PC-9 (cell line): ENCODE measurements at regions of chr16 and their contacts with region 1.

Region 1: GRCh38 chr16:31868691-31869167 is 4.9 kb upstream of the ZNF267 start:
- DNase-seq: peak; percentile 54 to 78
- H3K4me3 ChIP-seq: no peak overlapping the region
- H3K27ac ChIP-seq: no peak overlapping the region
- H3K4me1 ChIP-seq: no peaks in the 10 kb centered on the region
- H3K27me3 ChIP-seq: peaks cover 13% of the 10 kb centered on the region
- CTCF ChIP-seq: peak; percentile 94

Region 2: GRCh38 chr16:30957456-30958174 is 911.1 kb before region 1 on chr16 and contains the start of gene SETD1A:
- CTCF ChIA-PET with region 1: no interaction called
- POLR2A ChIA-PET with region 1: no interaction called
- intact Hi-C with region 1: loop called (anchors 10 kb)
- DNase-seq: peak; percentile 86 to 96
- H3K4me3 ChIP-seq: peak within 1 kb of the TSS; percentile 97
- H3K27ac ChIP-seq: peak within 1 kb of the TSS; percentile 82
- H3K4me1 ChIP-seq: peaks cover 9% of the 10 kb centered on the region
- H3K27me3 ChIP-seq: no peaks in the 10 kb centered on the region
- CTCF ChIP-seq: no peak
- total RNA-seq, gene SETD1A: 29.6 and 33.2 TPM in 2 replicates